ENCODE measurements at regions of chr1 and their contacts with region 1.

Region 1: GRCh38 chr1:203368624-203369451 is 17.9 kb upstream of the FMOD start:
- DNase-seq: peak in 4 of 5 donors; percentile 64 to 79 (median 70)
- ATAC-seq: peak; percentile 82 to 94 (median 92)
- H3K4me3 ChIP-seq: no peak overlapping the region
- H3K27ac ChIP-seq: peak overlapping the region; percentile 23 to 76 (median 52)
- H3K4me1 ChIP-seq: peaks cover 0 to 33% (median 21%) of the 10 kb centered on the region in 12 donors
- H3K27me3 ChIP-seq: peaks cover 0 to 6% (median 0%) of the 10 kb centered on the region in 9 donors
- CTCF ChIP-seq: peak; percentile 18 to 67 (median 52)
- POLR2A ChIP-seq: no peak

Region 2: GRCh38 chr1:203440771-203441170 is 71.9 kb after region 1 on chr1:
- intact Hi-C with region 1: loop called in 3 of 10 experiments (anchors 1 to 5 kb)
- DNase-seq: peak; percentile 70 to 85 (median 78)
- ATAC-seq: peak; percentile 92 to 97 (median 94)
- H3K4me3 ChIP-seq: no peak overlapping the region
- H3K27ac ChIP-seq: peak overlapping the region in 6 of 12 donors; percentile 1 to 77 (median 52)
- H3K4me1 ChIP-seq: peaks cover 0 to 45% (median 13%) of the 10 kb centered on the region in 12 donors
- H3K27me3 ChIP-seq: no peaks in the 10 kb centered on the region
- CTCF ChIP-seq: peak; percentile 40 to 76 (median 64)
- POLR2A ChIP-seq: no peak

Region 3: GRCh38 chr1:203475012-203475981 is 106.5 kb after region 1 on chr1 and contains the start of gene PRELP:
- intact Hi-C with region 1: loop called in 1 of 10 experiments (anchors 10 kb)
- DNase-seq: peak in 3 of 5 donors; percentile 22 to 58 (median 47)
- ATAC-seq: peak; percentile 43 to 68 (median 63)
- H3K4me3 ChIP-seq: peak within 1 kb of the TSS in 11 of 12 donors; percentile 20 to 72 (median 50)
- H3K27ac ChIP-seq: peak within 1 kb of the TSS; percentile 52 to 89 (median 77)
- H3K4me1 ChIP-seq: peaks cover 0 to 33% (median 5%) of the 10 kb centered on the region in 12 donors
- H3K27me3 ChIP-seq: no peaks in the 10 kb centered on the region
- CTCF ChIP-seq: no peak
- POLR2A ChIP-seq: peak in 1 of 2 donors; percentile 27
- total RNA-seq, gene PRELP: 3.6 to 61.9 (median 13.6) TPM

Region 4: DNA sequence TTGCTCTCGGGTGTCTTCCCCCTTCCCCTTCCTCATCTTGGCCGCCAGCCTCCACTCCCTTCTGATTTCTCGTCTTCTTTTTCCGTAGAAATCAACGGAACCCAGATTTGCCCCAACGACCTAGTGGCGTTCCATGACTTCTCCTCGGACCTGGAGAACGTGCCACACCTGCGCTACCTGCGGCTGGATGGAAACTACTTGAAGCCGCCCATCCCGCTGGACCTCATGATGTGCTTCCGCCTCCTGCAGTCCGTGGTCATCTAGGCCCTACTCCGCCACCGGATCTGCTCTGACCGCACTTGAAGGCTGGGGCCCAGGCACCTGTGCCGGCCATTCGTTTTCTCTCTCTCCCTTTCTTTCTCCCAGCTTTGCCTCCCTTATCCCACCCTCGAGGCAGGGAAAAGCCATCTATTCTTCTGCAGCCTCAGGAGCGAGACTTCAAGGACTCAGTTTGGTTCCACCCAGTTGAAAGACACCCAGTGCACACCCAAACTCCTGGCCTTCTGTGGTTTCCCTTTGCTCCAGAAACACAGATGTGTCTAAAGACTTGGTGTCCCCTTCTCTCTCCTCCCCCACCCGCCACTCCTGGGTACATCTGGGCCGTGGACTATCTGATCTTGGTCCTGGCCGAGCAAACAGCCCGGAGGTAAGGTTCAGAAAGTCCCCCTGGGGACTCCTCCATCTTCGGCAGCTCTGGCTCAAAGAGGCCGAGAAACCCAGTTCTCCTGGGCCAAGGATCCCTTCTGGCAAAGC is 118.0 kb after region 1 on chr1:
- intact Hi-C with region 1: loop called in 6 of 10 experiments (anchors 1 to 5 kb)
- DNase-seq: peak in 1 of 5 donors; percentile 38
- ATAC-seq: peak in 3 of 4 donors; percentile 3 to 34 (median 23)
- H3K4me3 ChIP-seq: peak overlapping the region in 11 of 12 donors; percentile 10 to 54 (median 45)
- H3K27ac ChIP-seq: peak overlapping the region; percentile 55 to 90 (median 84)
- H3K4me1 ChIP-seq: peaks cover 0 to 46% (median 16%) of the 10 kb centered on the region in 12 donors
- H3K27me3 ChIP-seq: no peaks in the 10 kb centered on the region
- CTCF ChIP-seq: no peak
- POLR2A ChIP-seq: no peak